Cardiac septum (tissue), 1 donor: ENCODE measurements at regions of chr17 and their contacts with region 1.

Region 1: GRCh38 chr17:75430159-75430974 is 24.9 kb upstream of the GRB2 start:
- DNase-seq: no peak

Region 2: DNA sequence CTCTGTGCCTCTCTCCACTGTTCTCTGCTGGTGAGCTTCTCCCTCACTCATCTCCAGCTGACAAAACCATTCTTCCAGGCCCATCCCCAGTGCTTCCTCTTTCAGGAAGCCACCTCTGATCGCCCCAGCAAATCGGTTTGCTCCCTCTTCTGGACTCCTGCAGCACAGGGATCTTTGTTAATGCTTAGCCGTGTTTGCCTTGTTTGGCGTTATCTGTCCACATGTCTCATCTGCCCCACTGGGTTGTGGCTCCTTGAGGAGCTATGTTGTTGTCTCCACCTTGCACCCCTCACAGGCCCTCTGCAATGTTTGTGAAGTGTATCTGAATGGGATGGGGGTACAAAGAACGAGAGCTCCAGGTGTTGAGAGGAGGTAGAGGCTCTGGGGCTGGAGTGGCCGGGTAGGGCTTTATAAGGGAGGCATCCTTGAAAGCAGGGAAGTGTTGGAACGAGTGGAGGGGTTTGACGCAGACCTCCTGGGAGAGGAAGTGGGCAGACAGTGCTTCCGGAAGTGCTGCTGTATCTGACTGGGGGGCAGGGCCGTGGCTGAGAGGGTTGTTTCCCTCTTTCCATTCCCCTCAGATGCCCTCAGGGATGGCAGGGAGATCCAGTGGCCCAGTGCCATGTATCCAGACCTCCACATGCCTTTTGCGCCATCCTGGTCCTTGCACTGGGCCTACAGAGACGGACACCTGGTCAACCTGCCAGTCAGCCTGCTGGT is 57.1 kb after region 1 on chr17:
- intact Hi-C with region 1: loop called (anchors 5 kb)
- DNase-seq: no peak

Region 3: GRCh38 chr17:75571197-75571873 is 141.0 kb after region 1 on chr17:
- intact Hi-C with region 1: no loop called
- DNase-seq: no peak

Region 4: GRCh38 chr17:75589012-75589918 is 158.9 kb after region 1 on chr17:
- intact Hi-C with region 1: loop called (anchors 1 kb)
- DNase-seq: peak; percentile 99